Activated CD8-positive, alpha-beta T cell treated with anti-CD3 and anti-CD28 coated beads for 36 hours (primary cell): ENCODE measurements at regions of chr6 and their contacts with region 1.

Region 1: GRCh38 chr6:107489636-107490565 is at the start of gene SOBP:
- DNase-seq: peak; percentile 55
- ATAC-seq: peak; percentile 64
- H3K4me3 Mint-ChIP-seq: peak within 1 kb of the TSS; percentile 76
- H3K27ac Mint-ChIP-seq: no peak within 1 kb of the TSS
- H3K4me1 Mint-ChIP-seq: peaks cover 15% of the 10 kb centered on the region
- H3K27me3 Mint-ChIP-seq: peaks cover 34% of the 10 kb centered on the region
- CTCF ChIP-seq: no peak
- total RNA-seq, gene SOBP: 0.77 to 1.1 TPM

Region 2: GRCh38 chr6:107459283-107460082 is 30.4 kb before region 1 on chr6 and contains the start of gene PDSS2:
- CTCF ChIA-PET with region 1: interaction called, 5 read pairs
- POLR2A ChIA-PET with region 1: interaction called, 11 read pairs
- intact Hi-C with region 1: no loop called
- DNase-seq: peak; percentile 100
- ATAC-seq: peak; percentile 97
- H3K4me3 Mint-ChIP-seq: peak within 1 kb of the TSS; percentile 86
- H3K27ac Mint-ChIP-seq: peak within 1 kb of the TSS; percentile 90
- H3K4me1 Mint-ChIP-seq: peaks cover 15% of the 10 kb centered on the region
- H3K27me3 Mint-ChIP-seq: no peaks in the 10 kb centered on the region
- CTCF ChIP-seq: no peak
- total RNA-seq, gene PDSS2: 13.2 to 14.8 TPM

Region 3: DNA sequence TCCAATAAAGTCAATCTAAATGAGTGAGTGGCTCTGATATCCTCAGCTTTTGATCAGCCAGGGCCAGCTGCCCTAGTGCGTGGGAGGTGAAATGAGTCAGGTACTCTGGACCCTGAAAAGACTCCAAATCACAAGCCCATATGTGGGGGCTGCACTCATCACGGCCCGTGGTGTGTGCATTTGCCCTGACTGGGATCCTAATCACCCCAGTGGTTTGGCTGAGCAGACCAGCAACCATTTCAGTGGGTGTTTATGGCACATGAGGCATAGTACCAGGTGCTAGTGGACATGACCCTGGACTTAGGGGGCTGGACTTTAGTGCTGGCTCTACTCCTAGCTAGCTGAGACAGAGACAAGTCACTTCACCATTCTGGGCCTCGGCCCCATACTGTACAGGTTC is 294.8 kb after region 1 on chr6:
- CTCF ChIA-PET with region 1: no interaction called
- POLR2A ChIA-PET with region 1: no interaction called
- intact Hi-C with region 1: no loop called
- DNase-seq: peak; percentile 76
- ATAC-seq: peak; percentile 73
- H3K4me3 Mint-ChIP-seq: no peak overlapping the region
- H3K27ac Mint-ChIP-seq: peak overlapping the region; percentile 75
- H3K4me1 Mint-ChIP-seq: peaks cover 79% of the 10 kb centered on the region
- H3K27me3 Mint-ChIP-seq: no peaks in the 10 kb centered on the region
- CTCF ChIP-seq: no peak